IMR-90 (cell line): ENCODE measurements at regions of chr19 and their contacts with region 1.

Region 1: DNA sequence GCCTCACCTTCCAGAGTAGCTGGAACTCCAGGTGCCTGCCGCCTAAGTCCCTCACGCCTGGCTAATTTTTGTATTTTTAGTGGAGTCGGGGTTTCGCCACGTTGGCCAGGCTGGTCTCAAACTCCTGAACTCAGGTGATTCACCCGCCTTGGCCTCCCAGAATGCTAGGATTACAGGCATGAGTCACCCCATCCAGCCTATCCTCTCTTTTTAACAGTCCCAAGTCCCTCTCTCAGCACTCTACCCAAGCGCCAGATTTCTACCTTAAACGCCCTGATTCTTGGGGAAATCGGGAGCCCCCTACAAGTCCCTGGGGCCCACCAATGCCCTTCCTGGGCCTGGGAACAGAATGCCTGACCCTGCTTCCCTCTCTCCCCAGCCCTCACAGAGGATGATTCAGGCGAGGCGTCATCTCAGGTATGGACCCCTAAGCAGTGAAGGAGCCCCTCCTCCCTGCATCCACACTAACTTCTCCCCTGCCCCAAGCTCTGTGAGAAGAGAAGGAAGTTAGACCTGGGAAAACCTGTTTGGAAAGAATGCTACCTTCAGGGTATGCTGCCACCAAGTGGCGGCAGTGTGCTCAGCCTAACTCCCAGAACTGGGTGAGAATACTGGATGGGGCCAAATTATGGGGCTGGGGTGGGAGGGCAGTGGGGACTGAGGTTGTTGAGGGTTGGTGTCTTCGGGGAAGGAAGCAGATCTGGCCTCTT is 20.8 kb upstream of the EBI3 start:
- DNase-seq: peak; percentile 43
- ATAC-seq: peak; percentile 36
- H3K4me3 ChIP-seq: no peak overlapping the region
- H3K27ac ChIP-seq: no peak overlapping the region
- H3K4me1 ChIP-seq: no peaks in the 10 kb centered on the region
- H3K27me3 ChIP-seq: peaks cover 3% of the 10 kb centered on the region; the same call in 1 of the 2 replicates
- CTCF ChIP-seq: peak; percentile 57
- POLR2A ChIP-seq: no peak
- RAD21 ChIP-seq: peak; percentile 32; the same call in 1 of the 2 replicates

Region 2: DNA sequence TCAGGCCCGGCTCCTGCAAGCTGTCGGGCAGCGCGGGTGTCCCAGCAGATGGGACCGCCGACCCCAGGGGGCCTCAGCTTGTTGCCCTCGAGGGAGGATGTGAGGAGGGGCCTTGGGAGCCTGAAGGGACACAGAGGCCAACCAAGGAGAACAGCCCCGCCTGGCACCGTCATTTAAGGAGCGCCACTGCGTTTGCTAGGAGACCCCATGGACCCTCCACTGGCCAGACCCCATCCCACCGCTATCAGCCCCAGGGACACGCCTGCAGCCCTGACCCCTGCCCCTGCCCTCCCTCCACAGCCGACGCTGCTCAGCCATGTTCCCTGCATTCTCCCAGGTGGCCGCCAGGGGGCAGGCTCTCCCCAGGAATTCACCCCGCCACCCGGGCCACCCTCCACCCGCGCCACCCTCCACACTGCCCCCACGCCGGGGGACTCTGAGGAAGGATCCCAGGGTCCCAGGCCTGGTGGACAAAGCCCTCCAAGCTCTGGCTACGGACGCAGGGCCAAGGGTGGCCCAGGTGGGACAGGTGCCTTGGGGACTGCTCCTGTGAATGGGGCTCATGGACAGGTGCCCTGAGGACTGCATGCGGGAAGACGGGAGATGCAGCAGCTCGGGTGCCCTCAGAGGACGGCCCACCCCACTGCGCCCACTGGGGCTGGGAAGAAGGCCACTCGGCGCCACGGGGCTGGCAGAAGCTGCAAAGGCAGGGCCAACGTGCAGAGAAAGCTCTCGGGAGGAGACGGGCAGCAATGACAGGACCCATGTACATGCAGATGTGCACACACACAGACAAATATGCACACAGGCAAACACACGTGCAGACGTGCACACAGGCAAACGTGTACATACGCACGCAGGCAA is 542.6 kb before region 1 on chr19:
- CTCF ChIA-PET with region 1: no interaction called
- POLR2A ChIA-PET with region 1: no interaction called
- dilution Hi-C with region 1: no loop called
- in situ Hi-C with region 1: no loop called
- intact Hi-C with region 1: loop called (anchors 10 kb)
- DNase-seq: no peak
- ATAC-seq: peak; percentile 84
- H3K4me3 ChIP-seq: no peak overlapping the region
- H3K27ac ChIP-seq: no peak overlapping the region
- H3K4me1 ChIP-seq: peaks cover 7% of the 10 kb centered on the region
- H3K27me3 ChIP-seq: no peaks in the 10 kb centered on the region
- CTCF ChIP-seq: peak; percentile 86
- POLR2A ChIP-seq: no peak
- RAD21 ChIP-seq: peak; percentile 85

Region 3: GRCh38 chr19:3984908-3985642 is 223.5 kb before region 1 on chr19 and contains the start of gene EEF2:
- CTCF ChIA-PET with region 1: interaction called, 6 read pairs
- POLR2A ChIA-PET with region 1: no interaction called
- dilution Hi-C with region 1: no loop called
- in situ Hi-C with region 1: loop called (anchors 5 kb)
- intact Hi-C with region 1: loop called (anchors 1 kb)
- DNase-seq: peak; percentile 87
- ATAC-seq: peak; percentile 46
- H3K4me3 ChIP-seq: peak within 1 kb of the TSS; percentile 79
- H3K27ac ChIP-seq: peak within 1 kb of the TSS; percentile 93
- H3K4me1 ChIP-seq: peaks cover 13% of the 10 kb centered on the region
- H3K27me3 ChIP-seq: no peaks in the 10 kb centered on the region
- CTCF ChIP-seq: no peak
- POLR2A ChIP-seq: peak; percentile 100
- RAD21 ChIP-seq: no peak
- total RNA-seq, gene EEF2: 1,727 and 2,161 TPM in 2 replicates

Region 4: GRCh38 chr19:4065430-4066175 is 142.9 kb before region 1 on chr19:
- CTCF ChIA-PET with region 1: no interaction called
- POLR2A ChIA-PET with region 1: no interaction called
- dilution Hi-C with region 1: no loop called
- in situ Hi-C with region 1: no loop called
- intact Hi-C with region 1: loop called (anchors 2 kb)
- DNase-seq: peak; percentile 98
- ATAC-seq: peak; percentile 84
- H3K4me3 ChIP-seq: peak overlapping the region; percentile 83
- H3K27ac ChIP-seq: no peak overlapping the region; the same call in 1 of the 2 replicates
- H3K4me1 ChIP-seq: peaks cover 20% of the 10 kb centered on the region
- H3K27me3 ChIP-seq: no peaks in the 10 kb centered on the region
- CTCF ChIP-seq: no peak
- POLR2A ChIP-seq: peak; percentile 19; the same call in 1 of the 2 replicates
- RAD21 ChIP-seq: no peak

Region 5: DNA sequence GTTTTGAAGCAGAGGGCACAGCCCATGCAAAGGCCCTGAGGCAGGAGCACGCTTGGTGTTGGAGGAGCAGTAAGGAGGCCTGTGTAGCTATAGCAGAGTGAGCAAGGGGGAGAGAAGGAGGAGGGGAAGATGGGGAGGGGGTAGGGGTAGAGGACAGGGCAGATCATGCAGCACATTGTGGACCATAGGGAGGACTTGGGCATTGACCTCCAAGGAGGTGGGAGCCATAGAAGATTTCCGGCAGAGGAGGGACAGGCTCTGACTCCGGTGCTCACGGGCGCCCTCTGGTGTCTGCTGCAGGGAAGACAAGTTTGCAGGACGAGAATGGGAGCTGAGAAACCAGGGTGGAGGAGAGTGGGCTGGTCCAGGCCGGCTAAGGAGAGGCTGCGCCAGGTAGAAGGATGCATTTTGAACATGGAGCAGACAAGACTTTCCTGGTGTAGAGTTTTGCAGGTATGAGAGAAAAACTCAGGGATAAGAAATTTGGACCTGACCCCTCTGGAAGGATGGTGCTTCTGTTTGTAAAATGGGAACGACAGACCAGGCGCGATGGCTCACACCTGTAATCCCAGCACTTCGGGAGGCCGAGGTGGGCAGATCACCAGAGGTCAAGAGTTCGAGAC is 68.8 kb before region 1 on chr19:
- CTCF ChIA-PET with region 1: interaction called, 4 read pairs
- POLR2A ChIA-PET with region 1: no interaction called
- dilution Hi-C with region 1: no loop called
- in situ Hi-C with region 1: no loop called
- intact Hi-C with region 1: loop called (anchors 2 kb)
- DNase-seq: peak; percentile 31
- ATAC-seq: peak; percentile 78
- H3K4me3 ChIP-seq: no peak overlapping the region
- H3K27ac ChIP-seq: no peak overlapping the region
- H3K4me1 ChIP-seq: peaks cover 2% of the 10 kb centered on the region; the same call in 1 of the 2 replicates
- H3K27me3 ChIP-seq: no peaks in the 10 kb centered on the region
- CTCF ChIP-seq: peak; percentile 70
- POLR2A ChIP-seq: no peak
- RAD21 ChIP-seq: peak; percentile 48; the same call in 1 of the 2 replicates

Region 6: GRCh38 chr19:4164262-4164661 is 44.3 kb before region 1 on chr19:
- CTCF ChIA-PET with region 1: no interaction called
- POLR2A ChIA-PET with region 1: no interaction called
- dilution Hi-C with region 1: no loop called
- in situ Hi-C with region 1: no loop called
- intact Hi-C with region 1: loop called (anchors 1 kb)
- DNase-seq: no peak
- ATAC-seq: no peak
- H3K4me3 ChIP-seq: no peak overlapping the region
- H3K27ac ChIP-seq: no peak overlapping the region
- H3K4me1 ChIP-seq: no peaks in the 10 kb centered on the region
- H3K27me3 ChIP-seq: peaks cover 8% of the 10 kb centered on the region; the same call in 1 of the 2 replicates
- CTCF ChIP-seq: no peak
- POLR2A ChIP-seq: no peak
- RAD21 ChIP-seq: no peak

Region 7: GRCh38 chr19:4369888-4370260 is 161.3 kb after region 1 on chr19:
- CTCF ChIA-PET with region 1: no interaction called
- POLR2A ChIA-PET with region 1: no interaction called
- dilution Hi-C with region 1: no loop called
- in situ Hi-C with region 1: no loop called
- intact Hi-C with region 1: no loop called
- DNase-seq: peak; percentile 26
- ATAC-seq: peak; percentile 42; the same call in 1 of the 2 replicates
- H3K4me3 ChIP-seq: no peak overlapping the region
- H3K27ac ChIP-seq: no peak overlapping the region
- H3K4me1 ChIP-seq: peaks cover 38% of the 10 kb centered on the region
- H3K27me3 ChIP-seq: no peaks in the 10 kb centered on the region
- CTCF ChIP-seq: peak; percentile 43
- POLR2A ChIP-seq: no peak
- RAD21 ChIP-seq: peak; percentile 37

Region 8: GRCh38 chr19:4609878-4610511 is 401.5 kb after region 1 on chr19:
- CTCF ChIA-PET with region 1: no interaction called
- POLR2A ChIA-PET with region 1: no interaction called
- dilution Hi-C with region 1: no loop called
- in situ Hi-C with region 1: no loop called
- intact Hi-C with region 1: no loop called
- DNase-seq: no peak
- ATAC-seq: no peak
- H3K4me3 ChIP-seq: no peak overlapping the region
- H3K27ac ChIP-seq: no peak overlapping the region
- H3K4me1 ChIP-seq: no peaks in the 10 kb centered on the region; the same call in 1 of the 2 replicates
- H3K27me3 ChIP-seq: peaks cover 41% of the 10 kb centered on the region
- CTCF ChIP-seq: no peak
- POLR2A ChIP-seq: no peak
- RAD21 ChIP-seq: no peak